Heart left ventricle (tissue), 16 donors: ENCODE measurements at regions of chr9 and their contacts with region 1.

Region 1: DNA sequence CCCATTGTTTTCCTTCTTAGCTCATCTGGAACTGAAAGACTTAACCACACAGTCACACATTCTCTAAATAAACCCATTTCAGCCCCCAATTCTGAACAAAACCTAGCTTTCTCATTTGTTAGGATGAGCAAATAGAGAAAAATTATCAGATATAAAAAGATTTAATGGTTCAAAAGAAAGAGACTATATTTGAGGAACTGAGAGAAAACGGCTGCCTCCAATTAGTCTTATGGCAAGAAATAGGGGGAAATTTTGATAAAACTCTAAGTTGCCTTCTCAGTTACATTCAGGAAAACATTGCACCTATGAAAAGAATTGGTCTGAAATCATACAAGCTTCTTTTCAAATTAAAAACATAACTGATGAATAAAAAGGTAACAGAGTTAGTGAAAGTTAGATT is 63.7 kb upstream of the ALDH1B1 start:
- DNase-seq: no peak
- ATAC-seq: no peak
- H3K4me3 ChIP-seq: no peak overlapping the region
- H3K27ac ChIP-seq: no peak overlapping the region
- H3K4me1 ChIP-seq: no peaks in the 10 kb centered on the region
- H3K27me3 ChIP-seq: no peaks in the 10 kb centered on the region
- CTCF ChIP-seq: no peak
- POLR2A ChIP-seq: no peak

Region 2: GRCh38 chr9:38339087-38339486 is 10.3 kb after region 1 on chr9:
- intact Hi-C with region 1: loop called in 1 of 10 experiments (anchors 1 kb)
- DNase-seq: peak in 1 of 5 donors; percentile 53
- ATAC-seq: peak; percentile 16 to 83 (median 48)
- H3K4me3 ChIP-seq: no peak overlapping the region
- H3K27ac ChIP-seq: no peak overlapping the region
- H3K4me1 ChIP-seq: peaks cover 0 to 8% (median 0%) of the 10 kb centered on the region in 12 donors
- H3K27me3 ChIP-seq: no peaks in the 10 kb centered on the region
- CTCF ChIP-seq: no peak
- POLR2A ChIP-seq: no peak